Prostate gland (tissue), 2 donors: ENCODE measurements at regions of chr7 and their contacts with region 1.

Region 1: DNA sequence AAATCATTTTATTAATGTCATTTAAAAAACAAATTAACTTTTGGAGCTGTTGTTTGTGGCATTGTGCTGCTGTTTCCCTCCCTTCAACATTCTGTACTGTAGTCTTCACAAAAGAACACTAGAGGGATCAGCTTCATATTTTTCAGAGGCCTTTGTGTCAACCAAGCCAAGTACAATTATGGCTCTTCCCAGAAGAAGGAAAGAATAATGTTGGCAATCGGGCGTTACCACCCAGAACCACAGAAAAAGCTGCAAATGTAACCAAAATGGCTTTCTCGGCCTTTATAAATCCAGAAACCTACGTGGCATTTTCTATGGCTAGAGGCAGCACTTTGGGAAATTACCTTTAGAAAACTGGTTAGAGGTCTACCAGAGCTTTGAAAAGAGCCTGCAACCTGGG is 98.8 kb upstream of the COL1A2 start:
- DNase-seq: no peak
- H3K4me3 ChIP-seq: no peak overlapping the region
- H3K27ac ChIP-seq: peak overlapping the region in 1 of 2 donors; percentile 2
- H3K4me1 ChIP-seq: no peaks in the 10 kb centered on the region
- H3K27me3 ChIP-seq: no peaks in the 10 kb centered on the region
- CTCF ChIP-seq: peak in 3 of 4 experiments; percentile 19 to 56 (median 34)
- POLR2A ChIP-seq: no peak

Region 2: DNA sequence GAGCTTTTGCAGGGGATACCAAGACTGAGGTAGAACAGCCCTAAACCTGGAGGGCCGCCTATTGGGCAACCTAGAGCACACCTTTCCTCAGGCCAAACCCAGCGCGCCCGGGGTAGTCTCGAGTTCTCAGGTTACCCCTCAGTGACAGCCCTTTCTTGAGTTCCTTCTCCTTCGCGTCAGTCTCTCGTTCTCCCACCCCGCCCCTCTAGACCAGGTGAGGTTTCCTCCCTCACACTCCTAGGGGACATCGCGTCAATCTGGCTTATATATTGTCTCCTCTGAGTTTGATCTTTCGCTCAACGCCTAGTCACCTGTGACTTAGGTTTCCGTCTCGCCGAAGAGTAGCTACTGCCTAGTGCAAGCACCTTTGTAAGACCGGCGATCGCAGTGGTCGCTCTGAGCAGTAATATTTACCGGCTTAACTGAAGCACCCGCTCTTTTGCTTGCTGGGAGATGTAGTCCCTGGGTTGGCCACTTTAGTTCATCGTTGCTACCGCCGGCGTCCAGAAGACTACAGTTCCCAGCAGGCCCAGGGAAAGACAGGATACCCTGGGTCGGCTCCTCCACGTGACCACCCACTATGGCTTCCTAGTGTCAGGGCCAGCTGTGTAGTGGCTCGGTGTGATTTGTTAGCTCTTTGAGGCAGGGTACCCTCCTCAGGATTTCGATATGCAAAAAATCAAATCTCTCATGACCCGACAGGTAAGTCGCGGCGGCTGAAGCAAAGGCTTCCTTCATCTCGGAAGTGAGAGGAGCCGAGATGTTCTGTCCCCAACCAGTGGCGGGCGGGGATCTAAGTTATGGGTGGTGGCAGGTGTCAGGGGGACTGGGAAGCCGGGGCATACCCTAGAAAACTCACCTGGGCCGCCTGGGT is 1063.8 kb before region 1 on chr7 and contains the start of gene VPS50:
- intact Hi-C with region 1: loop called (anchors 5 kb)
- DNase-seq: peak; percentile 97
- H3K4me3 ChIP-seq: peak within 1 kb of the TSS; percentile 56 to 60
- H3K27ac ChIP-seq: peak within 1 kb of the TSS; percentile 69 to 71
- H3K4me1 ChIP-seq: no peaks in the 10 kb centered on the region
- H3K27me3 ChIP-seq: no peaks in the 10 kb centered on the region
- CTCF ChIP-seq: peak in 3 of 4 experiments; percentile 37 to 51 (median 37)
- POLR2A ChIP-seq: peak; percentile 29
- total RNA-seq, gene VPS50: 14.1 to 20.6 TPM

Region 3: GRCh38 chr7:93890464-93891068 is 405.3 kb before region 1 on chr7 and contains the start of gene TFPI2:
- intact Hi-C with region 1: no loop called
- DNase-seq: peak; percentile 12
- H3K4me3 ChIP-seq: peak within 1 kb of the TSS; percentile 33 to 39
- H3K27ac ChIP-seq: no peak within 1 kb of the TSS
- H3K4me1 ChIP-seq: no peaks in the 10 kb centered on the region
- H3K27me3 ChIP-seq: no peaks in the 10 kb centered on the region
- CTCF ChIP-seq: no peak
- POLR2A ChIP-seq: peak; percentile 6
- total RNA-seq, gene TFPI2: 1.7 to 10.3 TPM

Region 4: DNA sequence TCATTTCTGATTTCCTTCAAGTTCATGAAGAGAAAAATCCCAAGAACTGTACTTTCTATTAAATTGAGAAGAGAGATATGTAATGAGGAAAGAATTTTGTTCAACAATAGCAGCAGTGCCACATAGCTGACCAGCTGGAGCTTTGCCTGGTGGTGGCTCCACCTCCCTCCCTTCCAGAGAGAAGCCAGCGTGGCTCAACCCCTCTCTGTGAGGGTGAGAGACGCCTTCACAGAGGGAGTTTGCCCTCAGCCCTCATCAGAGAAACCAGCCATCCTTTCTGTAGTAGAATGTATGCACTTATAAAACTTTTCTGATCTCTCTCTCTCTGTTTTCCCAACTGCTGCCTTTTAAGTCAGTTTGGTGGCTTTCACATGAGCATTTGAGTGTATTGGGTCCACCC is 78.4 kb after region 1 on chr7:
- intact Hi-C with region 1: loop called (anchors 2 kb)
- DNase-seq: no peak
- H3K4me3 ChIP-seq: no peak overlapping the region
- H3K27ac ChIP-seq: peak overlapping the region; percentile 50 to 65
- H3K4me1 ChIP-seq: no peaks in the 10 kb centered on the region
- H3K27me3 ChIP-seq: no peaks in the 10 kb centered on the region
- CTCF ChIP-seq: no peak
- POLR2A ChIP-seq: no peak

Region 5: GRCh38 chr7:94395141-94396036 is 99.5 kb after region 1 on chr7:
- intact Hi-C with region 1: loop called (anchors 1 kb)
- DNase-seq: peak; percentile 33
- H3K4me3 ChIP-seq: peak overlapping the region; percentile 23 to 29
- H3K27ac ChIP-seq: peak overlapping the region; percentile 63 to 77
- H3K4me1 ChIP-seq: no peaks in the 10 kb centered on the region
- H3K27me3 ChIP-seq: no peaks in the 10 kb centered on the region
- CTCF ChIP-seq: peak; percentile 26 to 81 (median 56)
- POLR2A ChIP-seq: no peak

Region 6: GRCh38 chr7:94933256-94933990 is 637.6 kb after region 1 on chr7:
- intact Hi-C with region 1: no loop called
- DNase-seq: no peak
- H3K4me3 ChIP-seq: no peak overlapping the region
- H3K27ac ChIP-seq: no peak overlapping the region
- H3K4me1 ChIP-seq: no peaks in the 10 kb centered on the region
- H3K27me3 ChIP-seq: no peaks in the 10 kb centered on the region
- CTCF ChIP-seq: no peak
- POLR2A ChIP-seq: no peak